ENCODE measurements at regions of chr17 and their contacts with region 1.

Region 1: DNA sequence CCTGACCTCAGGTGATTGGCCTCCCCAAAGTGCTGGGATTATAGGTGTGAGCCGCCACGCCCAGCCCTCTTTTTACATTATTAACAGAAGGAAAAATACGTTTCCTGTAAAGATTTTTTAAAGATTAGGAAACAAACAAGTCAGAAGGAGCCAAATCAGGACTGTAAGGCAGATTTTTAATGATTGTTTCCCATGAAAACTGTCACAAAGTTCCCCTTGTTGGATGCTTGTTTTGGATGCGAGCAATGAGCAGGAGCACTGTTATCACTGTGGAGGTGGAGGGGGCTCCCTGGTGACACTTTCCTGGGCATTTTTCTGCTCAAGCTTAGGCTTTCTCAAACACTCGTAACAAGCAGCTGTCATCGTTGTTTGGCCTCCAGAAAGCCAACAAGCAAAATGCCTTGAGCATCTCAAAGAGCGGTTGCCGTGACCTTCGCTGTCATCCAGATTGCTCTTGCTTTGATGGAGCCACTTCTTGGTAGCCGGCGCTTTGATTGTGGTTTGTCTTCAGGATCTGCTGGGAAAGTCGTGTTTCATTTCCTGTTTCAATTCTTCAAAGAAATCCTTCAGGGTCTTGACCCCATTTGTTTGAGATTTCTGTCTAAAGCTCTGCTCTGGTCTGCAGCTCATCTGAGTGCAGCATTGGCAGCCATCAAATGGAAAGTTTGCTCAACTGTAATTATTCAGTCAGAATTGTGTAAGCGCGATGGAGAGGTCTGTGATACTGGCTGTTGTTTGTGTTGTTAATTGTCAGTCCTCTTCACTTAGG is 128.7 kb downstream of the RPTOR start:
- DNase-seq: peak; percentile 38
- H3K4me3 ChIP-seq: no peak overlapping the region
- H3K27ac ChIP-seq: no peak overlapping the region
- H3K4me1 ChIP-seq: peaks cover 22% of the 10 kb centered on the region
- H3K27me3 ChIP-seq: no peaks in the 10 kb centered on the region
- CTCF ChIP-seq: no peak
- POLR2A ChIP-seq: no peak

Region 2: DNA sequence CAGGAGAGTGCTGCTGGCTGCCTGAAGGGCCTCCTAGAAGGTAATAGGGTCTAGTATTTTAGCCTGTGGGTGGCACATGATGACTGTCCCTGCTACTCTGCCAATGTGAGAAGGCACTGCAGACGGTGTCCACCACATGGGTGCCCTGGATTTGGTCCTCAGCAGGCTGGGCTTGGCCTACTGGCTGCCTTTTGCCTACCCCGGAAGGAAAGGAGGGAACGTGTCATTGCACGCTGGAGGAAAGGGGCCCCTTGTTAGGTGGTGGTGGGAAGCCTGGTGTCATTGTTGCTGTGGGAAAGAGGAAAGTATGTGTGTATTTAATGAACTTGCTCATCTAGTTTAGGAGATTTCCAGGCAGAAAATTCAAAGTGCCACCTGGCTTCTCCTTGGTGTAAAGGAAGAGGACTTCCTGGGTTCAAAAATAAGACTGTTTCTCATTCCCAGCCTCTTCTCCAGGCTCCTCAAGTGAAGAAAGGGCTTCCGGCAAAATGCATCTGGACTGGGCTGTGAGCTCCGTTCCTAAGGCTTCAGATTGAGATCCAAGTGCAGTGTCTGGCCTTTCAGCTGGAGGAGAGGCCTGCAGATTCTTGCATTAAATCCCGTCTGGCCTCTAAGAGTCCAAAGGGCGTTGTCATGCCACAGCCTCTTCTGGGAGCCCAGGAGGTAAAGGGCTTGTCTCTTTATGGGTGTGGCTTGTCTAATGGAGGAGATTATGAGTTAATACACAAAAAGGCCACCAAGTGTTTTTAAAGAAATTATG is 73.6 kb before region 1 on chr17:
- CTCF ChIA-PET with region 1: no interaction called
- POLR2A ChIA-PET with region 1: no interaction called
- dilution Hi-C with region 1: no loop called
- intact Hi-C with region 1: no loop called
- DNase-seq: no peak
- H3K4me3 ChIP-seq: no peak overlapping the region
- H3K27ac ChIP-seq: no peak overlapping the region
- H3K4me1 ChIP-seq: peaks cover 6% of the 10 kb centered on the region
- H3K27me3 ChIP-seq: no peaks in the 10 kb centered on the region
- CTCF ChIP-seq: no peak
- POLR2A ChIP-seq: no peak

Region 3: GRCh38 chr17:80761110-80761871 is 88.0 kb after region 1 on chr17:
- CTCF ChIA-PET with region 1: no interaction called
- POLR2A ChIA-PET with region 1: no interaction called
- dilution Hi-C with region 1: no loop called
- intact Hi-C with region 1: loop called (anchors 5 kb)
- DNase-seq: peak; percentile 87
- H3K4me3 ChIP-seq: peak overlapping the region in 1 of 3 experiments; percentile 7
- H3K27ac ChIP-seq: peak overlapping the region; percentile 78
- H3K4me1 ChIP-seq: peaks cover 59% of the 10 kb centered on the region
- H3K27me3 ChIP-seq: no peaks in the 10 kb centered on the region
- CTCF ChIP-seq: no peak
- POLR2A ChIP-seq: peak; percentile 49

Region 4: DNA sequence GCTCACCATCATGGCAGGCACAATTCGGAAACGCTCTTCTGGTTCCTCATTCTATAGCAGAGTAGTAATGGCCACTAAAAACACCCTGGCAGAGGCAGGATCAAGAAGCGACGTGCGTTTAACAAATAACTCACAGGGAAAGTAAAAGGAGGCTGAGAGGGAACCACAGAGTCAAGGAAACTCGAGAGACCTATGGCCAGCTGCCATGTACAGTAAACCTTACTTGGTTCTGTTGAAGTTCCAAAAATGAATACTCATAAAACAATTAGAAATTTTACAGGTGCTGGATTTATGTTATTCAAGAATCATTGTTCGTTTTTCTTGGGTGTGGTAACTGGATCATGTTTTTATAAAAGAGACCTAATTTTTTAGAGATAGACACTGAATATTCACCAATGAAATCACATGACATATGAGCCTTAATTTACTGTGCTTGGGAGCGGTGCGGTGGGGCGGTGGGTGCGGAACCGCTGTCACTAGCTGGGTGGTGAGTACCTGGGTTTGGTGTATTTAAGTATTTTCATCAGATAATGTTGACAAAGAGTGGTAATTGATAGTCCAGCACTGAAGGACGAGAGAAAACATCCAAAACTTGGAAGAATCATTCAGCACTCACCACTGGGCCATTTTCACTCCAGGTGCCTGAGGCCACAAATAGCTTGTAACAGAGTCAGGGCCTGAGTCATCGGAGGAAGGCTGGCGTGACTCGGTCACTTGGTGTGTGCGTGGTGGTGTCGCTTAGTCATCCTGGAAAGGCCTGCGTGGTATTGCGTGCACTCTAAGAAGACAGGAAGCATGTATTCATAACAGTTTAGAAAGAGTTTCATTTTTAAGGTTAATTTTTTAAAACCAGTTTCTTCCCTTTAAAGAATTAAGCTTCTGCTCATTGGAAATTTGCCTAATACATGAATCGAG is 182.9 kb after region 1 on chr17:
- CTCF ChIA-PET with region 1: no interaction called
- POLR2A ChIA-PET with region 1: no interaction called
- dilution Hi-C with region 1: no loop called
- intact Hi-C with region 1: loop called (anchors 10 kb)
- DNase-seq: peak; percentile 95
- H3K4me3 ChIP-seq: no peak overlapping the region
- H3K27ac ChIP-seq: peak overlapping the region; percentile 97
- H3K4me1 ChIP-seq: peaks cover 26% of the 10 kb centered on the region
- H3K27me3 ChIP-seq: no peaks in the 10 kb centered on the region
- CTCF ChIP-seq: no peak
- POLR2A ChIP-seq: no peak